Endothelial cell of umbilical vein (primary cell): ENCODE measurements at regions of chr6 and their contacts with region 1.

Region 1: DNA sequence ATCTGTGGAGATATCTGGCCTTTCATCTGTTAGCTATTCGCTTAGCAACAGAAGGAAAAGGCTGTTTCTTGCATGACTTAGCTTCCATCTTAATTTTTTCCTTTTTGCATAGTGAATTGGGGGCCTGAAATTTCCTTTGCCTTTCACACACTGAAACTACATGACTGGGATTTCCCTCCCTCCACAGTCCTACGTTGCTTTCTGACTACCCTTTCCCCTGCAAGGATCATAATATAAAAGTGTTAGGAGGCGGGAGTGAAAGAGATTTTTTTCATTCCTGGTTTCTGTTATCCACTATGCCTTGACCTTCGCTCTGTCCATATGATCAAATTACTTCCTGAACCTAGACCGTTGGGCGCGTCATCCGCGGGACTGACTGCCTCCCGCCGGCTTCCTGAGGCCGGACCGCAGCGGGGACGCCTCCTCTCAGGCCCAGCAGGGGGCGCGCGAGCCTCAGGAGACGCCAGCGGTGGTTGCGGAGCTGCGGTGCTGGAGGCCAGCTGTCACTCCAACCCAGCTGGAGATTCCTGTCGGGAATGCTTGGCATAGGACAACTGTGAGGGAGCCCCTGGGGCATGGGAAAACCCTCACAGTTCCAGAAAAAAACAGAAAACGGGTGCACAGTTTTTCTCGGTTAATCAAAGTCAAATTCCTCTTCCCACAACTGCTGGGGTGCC is 55.6 kb downstream of the MEP1A start:
- DNase-seq: peak; percentile 82
- H3K4me3 ChIP-seq: no peak overlapping the region
- H3K27ac ChIP-seq: peak overlapping the region; percentile 54
- H3K4me1 ChIP-seq: peaks cover 31% of the 10 kb centered on the region
- H3K27me3 ChIP-seq: no peaks in the 10 kb centered on the region
- CTCF ChIP-seq: peak; percentile 97
- POLR2A ChIP-seq: no peak

Region 2: DNA sequence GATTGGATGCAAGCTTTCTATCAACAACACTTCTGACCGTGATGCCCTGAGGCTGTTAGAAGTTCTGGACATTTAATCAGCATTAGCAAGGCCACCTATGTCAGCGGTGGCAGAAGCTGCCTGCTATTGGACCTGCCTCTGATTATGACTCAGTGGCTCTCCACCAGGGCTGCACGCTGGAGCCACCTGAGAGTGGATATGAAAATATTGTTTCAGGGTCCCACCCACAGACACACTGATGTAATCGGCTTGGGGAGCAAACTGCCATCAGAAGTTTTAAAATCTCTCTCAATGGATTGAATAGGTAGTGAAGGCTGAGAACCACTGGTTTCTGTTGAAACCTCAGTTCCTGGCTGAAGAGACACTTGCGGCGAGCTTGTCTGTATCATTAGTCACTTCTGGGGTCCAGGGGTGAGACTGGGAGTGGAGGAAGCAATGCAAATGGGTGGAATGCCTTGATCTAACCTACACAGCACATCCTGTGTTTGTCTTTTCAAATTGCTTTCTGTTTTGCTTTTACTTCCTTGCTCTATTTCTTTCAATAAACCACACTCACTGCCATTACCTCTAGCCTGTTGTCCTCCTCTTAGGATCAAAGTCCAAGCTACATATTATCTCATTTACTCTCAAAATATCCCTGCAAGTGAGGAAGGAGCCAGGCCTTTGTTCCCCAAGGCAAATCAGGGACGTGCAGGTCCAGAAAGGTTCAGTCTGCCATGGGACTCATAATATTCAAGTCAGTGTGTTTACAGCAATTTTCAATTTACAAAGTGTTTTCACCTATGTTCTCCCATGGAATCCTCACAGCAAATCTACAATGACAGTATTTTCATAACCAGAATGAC is 837.4 kb before region 1 on chr6:
- CTCF ChIA-PET with region 1: no interaction called
- POLR2A ChIA-PET with region 1: no interaction called
- dilution Hi-C with region 1: no loop called
- intact Hi-C with region 1: no loop called
- DNase-seq: peak; percentile 29
- H3K4me3 ChIP-seq: no peak overlapping the region
- H3K27ac ChIP-seq: no peak overlapping the region
- H3K4me1 ChIP-seq: peaks cover 13% of the 10 kb centered on the region
- H3K27me3 ChIP-seq: peaks cover 24 to 37% of the 10 kb centered on the region in 2 experiments
- CTCF ChIP-seq: no peak
- POLR2A ChIP-seq: no peak

Region 3: DNA sequence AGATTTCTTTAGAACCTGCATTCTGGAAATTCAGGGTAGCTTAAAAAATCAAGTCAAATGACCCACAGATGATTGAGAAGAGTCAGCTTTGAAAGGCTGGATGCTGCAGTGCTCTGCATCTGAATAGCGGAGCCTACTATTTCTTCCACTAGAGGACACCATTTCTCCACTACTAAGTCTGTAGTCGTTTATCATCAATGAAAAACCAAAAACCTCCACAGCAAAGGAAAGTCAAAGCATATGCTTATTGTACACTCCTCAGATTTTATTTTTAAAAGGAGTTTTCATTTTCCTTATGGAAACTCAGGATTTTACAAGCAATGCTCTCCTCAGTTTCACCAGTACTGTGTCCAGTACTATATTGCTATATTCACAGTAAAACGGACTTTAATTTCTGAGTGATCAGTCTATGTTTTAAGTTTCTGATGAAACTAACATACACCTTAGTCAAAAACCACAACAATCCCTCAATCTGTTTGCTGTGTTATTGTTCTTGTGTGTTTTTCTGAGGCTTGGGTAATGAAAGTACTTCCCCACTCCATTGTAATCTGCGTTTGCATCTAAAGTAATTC is 627.5 kb before region 1 on chr6:
- CTCF ChIA-PET with region 1: interaction called, 3 read pairs
- POLR2A ChIA-PET with region 1: no interaction called
- dilution Hi-C with region 1: no loop called
- intact Hi-C with region 1: loop called (anchors 1 kb)
- DNase-seq: peak; percentile 43
- H3K4me3 ChIP-seq: no peak overlapping the region
- H3K27ac ChIP-seq: no peak overlapping the region
- H3K4me1 ChIP-seq: no peaks in the 10 kb centered on the region
- H3K27me3 ChIP-seq: peaks cover 3 to 13% of the 10 kb centered on the region in 2 experiments
- CTCF ChIP-seq: peak; percentile 58 to 73
- POLR2A ChIP-seq: no peak

Region 4: DNA sequence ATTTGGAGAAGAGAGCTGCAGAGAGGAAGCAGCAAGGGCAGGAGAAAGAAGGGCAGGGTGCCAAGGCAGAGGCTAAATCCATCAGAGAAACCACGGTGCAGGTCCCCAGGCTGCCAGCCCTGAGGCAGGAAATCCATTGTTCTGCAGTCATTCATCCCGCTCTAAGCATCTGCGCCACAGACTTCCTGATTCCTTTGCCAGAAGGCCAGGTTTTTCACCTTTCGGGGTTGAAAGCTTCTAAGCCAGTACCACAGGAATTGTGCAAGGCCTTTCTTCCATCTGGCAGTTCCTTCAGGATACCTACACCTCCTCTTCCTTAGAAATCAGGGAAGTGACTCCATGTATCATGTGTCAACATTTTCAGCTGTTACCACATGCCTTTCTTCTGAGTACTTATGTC is 27.3 kb after region 1 on chr6:
- CTCF ChIA-PET with region 1: interaction called, 23 read pairs
- POLR2A ChIA-PET with region 1: no interaction called
- dilution Hi-C with region 1: no loop called
- intact Hi-C with region 1: loop called (anchors 1 kb)
- DNase-seq: peak; percentile 97
- H3K4me3 ChIP-seq: no peak overlapping the region
- H3K27ac ChIP-seq: peak overlapping the region; percentile 53
- H3K4me1 ChIP-seq: peaks cover 18% of the 10 kb centered on the region
- H3K27me3 ChIP-seq: no peaks in the 10 kb centered on the region
- CTCF ChIP-seq: no peak
- POLR2A ChIP-seq: no peak

Region 5: DNA sequence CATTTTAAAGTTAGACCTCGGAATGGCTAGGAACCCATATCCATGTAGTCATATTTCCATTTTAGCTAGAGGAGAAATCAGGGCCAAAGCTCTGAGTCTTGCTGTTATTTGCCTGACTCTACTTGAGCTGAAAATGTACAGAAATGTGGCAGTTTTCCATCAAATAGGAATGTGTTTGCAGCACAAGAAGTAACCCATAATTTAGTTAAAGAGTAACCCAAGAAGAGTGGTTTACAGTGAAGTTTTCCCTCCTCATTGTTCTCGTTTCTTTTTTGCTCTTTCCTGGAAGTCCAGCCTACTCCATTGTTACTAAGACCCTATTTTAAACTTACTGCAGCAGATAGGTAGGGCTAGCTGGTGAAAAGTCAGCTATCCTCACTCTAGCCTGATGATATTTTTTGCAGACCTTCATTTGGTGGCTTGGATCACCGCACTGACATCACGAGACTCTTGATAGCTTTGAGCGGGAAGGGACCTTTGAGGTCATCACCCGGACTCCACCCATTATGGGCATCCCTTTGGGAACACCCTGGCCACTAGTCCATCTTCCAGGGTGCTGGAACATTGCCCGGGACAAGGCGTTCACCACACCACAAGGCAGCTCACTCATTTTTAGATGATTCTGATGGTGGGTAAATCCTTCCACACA is 100.9 kb after region 1 on chr6:
- CTCF ChIA-PET with region 1: interaction called, 9 read pairs
- POLR2A ChIA-PET with region 1: no interaction called
- dilution Hi-C with region 1: no loop called
- intact Hi-C with region 1: loop called (anchors 1 kb)
- DNase-seq: peak; percentile 50
- H3K4me3 ChIP-seq: no peak overlapping the region
- H3K27ac ChIP-seq: peak overlapping the region; percentile 98
- H3K4me1 ChIP-seq: peaks cover 44% of the 10 kb centered on the region
- H3K27me3 ChIP-seq: no peaks in the 10 kb centered on the region
- CTCF ChIP-seq: no peak
- POLR2A ChIP-seq: no peak

Region 6: GRCh38 chr6:47034919-47035318 is 186.1 kb after region 1 on chr6:
- CTCF ChIA-PET with region 1: interaction called, 20 read pairs
- POLR2A ChIA-PET with region 1: no interaction called
- dilution Hi-C with region 1: no loop called
- intact Hi-C with region 1: no loop called
- DNase-seq: peak; percentile 85
- H3K4me3 ChIP-seq: no peak overlapping the region
- H3K27ac ChIP-seq: no peak overlapping the region
- H3K4me1 ChIP-seq: peaks cover 9% of the 10 kb centered on the region
- H3K27me3 ChIP-seq: peaks cover 0 to 2% of the 10 kb centered on the region in 2 experiments
- CTCF ChIP-seq: no peak
- POLR2A ChIP-seq: no peak

Region 7: GRCh38 chr6:47134476-47135189 is 285.8 kb after region 1 on chr6:
- CTCF ChIA-PET with region 1: no interaction called
- POLR2A ChIA-PET with region 1: no interaction called
- dilution Hi-C with region 1: no loop called
- intact Hi-C with region 1: loop called (anchors 2 kb)
- DNase-seq: peak; percentile 92
- H3K4me3 ChIP-seq: peak overlapping the region in 1 of 3 experiments; percentile 34
- H3K27ac ChIP-seq: peak overlapping the region; percentile 94
- H3K4me1 ChIP-seq: peaks cover 26% of the 10 kb centered on the region
- H3K27me3 ChIP-seq: no peaks in the 10 kb centered on the region
- CTCF ChIP-seq: no peak
- POLR2A ChIP-seq: no peak